ENCODE measurements at regions of chr1 and their contacts with region 1.

Region 1: DNA sequence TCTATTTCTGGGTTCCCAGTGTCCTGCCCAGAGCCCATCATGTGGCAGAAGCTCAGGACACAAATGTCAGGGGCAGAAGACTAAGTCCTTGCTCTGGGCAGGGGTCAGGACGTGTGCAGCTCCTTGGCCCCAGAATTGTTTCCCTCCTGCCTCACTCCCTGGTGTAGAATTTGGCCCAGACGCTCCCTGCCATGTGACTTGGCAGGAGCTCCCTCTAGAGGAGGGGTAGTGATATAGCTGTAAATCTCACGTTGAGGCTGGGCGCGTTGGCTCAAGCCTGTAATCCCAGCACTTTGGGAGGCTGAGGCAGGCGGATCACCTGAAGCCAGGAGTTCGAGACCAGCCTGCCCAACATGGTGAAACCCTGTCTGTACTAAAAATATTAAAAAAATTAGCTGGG is 91.2 kb downstream of the UBIAD1 start:
- DNase-seq: no peak
- ATAC-seq: peak; percentile 31
- H3K4me3 Mint-ChIP-seq: no peak overlapping the region
- H3K27ac Mint-ChIP-seq: no peak overlapping the region
- H3K4me1 Mint-ChIP-seq: no peaks in the 10 kb centered on the region
- H3K27me3 Mint-ChIP-seq: peaks cover 6% of the 10 kb centered on the region
- CTCF ChIP-seq: no peak

Region 2: GRCh38 chr1:11316701-11317100 is 47.5 kb before region 1 on chr1:
- CTCF ChIA-PET with region 1: no interaction called
- POLR2A ChIA-PET with region 1: no interaction called
- intact Hi-C with region 1: no loop called
- DNase-seq: no peak
- ATAC-seq: no peak
- H3K4me3 Mint-ChIP-seq: no peak overlapping the region
- H3K27ac Mint-ChIP-seq: no peak overlapping the region
- H3K4me1 Mint-ChIP-seq: peaks cover 4% of the 10 kb centered on the region
- H3K27me3 Mint-ChIP-seq: peaks cover 10% of the 10 kb centered on the region
- CTCF ChIP-seq: no peak

Region 3: GRCh38 chr1:11337580-11338073 is 26.5 kb before region 1 on chr1:
- CTCF ChIA-PET with region 1: no interaction called
- POLR2A ChIA-PET with region 1: no interaction called
- intact Hi-C with region 1: loop called (anchors 1 kb)
- DNase-seq: peak; percentile 68
- ATAC-seq: peak; percentile 59
- H3K4me3 Mint-ChIP-seq: no peak overlapping the region
- H3K27ac Mint-ChIP-seq: no peak overlapping the region
- H3K4me1 Mint-ChIP-seq: peaks cover 22% of the 10 kb centered on the region
- H3K27me3 Mint-ChIP-seq: peaks cover 22% of the 10 kb centered on the region
- CTCF ChIP-seq: peak; percentile 76

Measured in activated B cell treated with CpG ODN at 0.5 μM for 24 hours (primary cell).